Activated T-helper 1 cell treated with anti-CD3 and anti-CD28 coated beads, Interleukin-12 subunit alpha, Interleukin-12 subunit beta, Interleukin-2, Interleukin-4 antibody, amounts not matched to agents 30 ng/mL and 10 ng/mL and 1 ng/mL, durations not matched to agents 14 hours and 24 hours and 36 hours (primary cell): ENCODE measurements at regions of chrX and their contacts with region 1.

Region 1: GRCh38 chrX:53642337-53642736 is 44.2 kb downstream of the HUWE1 start:
- DNase-seq: no peak
- H3K4me3 Mint-ChIP-seq: no peak overlapping the region
- H3K27ac Mint-ChIP-seq: no peak overlapping the region
- H3K4me1 Mint-ChIP-seq: peaks cover 5% of the 10 kb centered on the region
- H3K27me3 Mint-ChIP-seq: no peaks in the 10 kb centered on the region

Region 2: DNA sequence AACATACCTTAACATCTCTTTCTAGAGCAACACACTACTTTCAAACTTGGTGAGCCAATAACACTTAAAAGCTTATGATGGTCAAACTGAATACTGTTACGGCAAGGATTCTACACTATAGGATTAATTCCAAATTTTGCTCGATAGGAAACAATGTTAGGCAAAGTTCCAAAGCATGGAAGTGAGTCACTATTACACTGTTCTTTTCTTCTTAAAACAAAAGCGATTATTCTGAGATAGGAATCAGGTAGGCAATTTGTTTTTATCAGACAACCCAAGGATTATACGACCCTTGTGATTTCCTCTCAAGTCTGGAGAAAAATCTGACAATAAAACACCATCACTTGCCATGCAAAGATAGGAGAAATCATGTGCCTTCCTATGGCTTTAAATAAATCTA is 37.3 kb before region 1 on chrX:
- intact Hi-C with region 1: loop called (anchors 5 kb)
- DNase-seq: no peak
- H3K4me3 Mint-ChIP-seq: no peak overlapping the region
- H3K27ac Mint-ChIP-seq: no peak overlapping the region
- H3K4me1 Mint-ChIP-seq: no peaks in the 10 kb centered on the region
- H3K27me3 Mint-ChIP-seq: no peaks in the 10 kb centered on the region

Region 3: DNA sequence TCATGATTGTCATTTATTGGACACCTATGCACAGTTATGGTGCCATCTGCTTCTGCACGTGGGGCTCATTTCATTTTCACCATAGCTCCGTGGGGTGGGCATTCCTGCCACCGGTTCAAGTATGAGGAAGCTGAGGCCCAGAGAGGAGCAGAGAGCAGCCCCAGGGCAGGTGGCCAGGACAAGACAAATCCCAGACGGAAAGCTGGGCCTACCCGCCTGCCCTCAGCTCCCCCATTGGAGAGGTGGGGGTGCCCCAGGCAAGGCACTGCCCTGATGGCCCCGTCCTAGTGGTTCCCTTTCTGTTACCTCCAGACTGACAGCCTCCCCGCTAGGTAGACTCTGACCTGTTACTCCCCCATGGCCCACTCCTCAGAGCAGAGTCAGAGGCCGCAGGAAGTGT is 117.8 kb after region 1 on chrX:
- intact Hi-C with region 1: no loop called
- DNase-seq: no peak
- H3K4me3 Mint-ChIP-seq: no peak overlapping the region
- H3K27ac Mint-ChIP-seq: no peak overlapping the region
- H3K4me1 Mint-ChIP-seq: no peaks in the 10 kb centered on the region
- H3K27me3 Mint-ChIP-seq: no peaks in the 10 kb centered on the region

Region 4: DNA sequence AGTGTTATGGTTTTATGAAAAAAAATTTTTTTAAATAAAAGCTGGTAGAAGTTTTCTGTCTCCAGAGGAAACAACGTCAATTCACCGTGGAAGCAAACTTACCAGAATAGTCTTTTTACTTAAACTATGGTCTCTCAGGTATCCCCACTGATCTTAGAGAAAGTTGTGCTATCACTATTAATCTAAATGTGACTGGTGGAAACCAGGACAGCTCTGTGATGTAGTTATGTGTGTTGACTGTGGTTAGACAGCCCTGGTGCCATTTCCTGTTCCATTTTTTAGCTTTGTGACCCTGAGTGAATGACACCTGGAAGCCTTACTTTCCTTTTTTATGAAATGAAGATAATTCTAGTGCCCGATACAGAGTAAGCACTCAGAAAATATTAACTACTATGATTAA is 155.9 kb after region 1 on chrX:
- intact Hi-C with region 1: no loop called
- DNase-seq: no peak
- H3K4me3 Mint-ChIP-seq: no peak overlapping the region
- H3K27ac Mint-ChIP-seq: no peak overlapping the region
- H3K4me1 Mint-ChIP-seq: peaks cover 11% of the 10 kb centered on the region
- H3K27me3 Mint-ChIP-seq: no peaks in the 10 kb centered on the region